PC-9 (cell line): ENCODE measurements at regions of chr6 and their contacts with region 1.

Region 1: GRCh38 chr6:108558372-108559096 is 2.2 kb upstream of the FOXO3 start:
- DNase-seq: peak; percentile 95 to 96
- H3K4me3 ChIP-seq: peak overlapping the region; percentile 99
- H3K27ac ChIP-seq: peak overlapping the region; percentile 83
- H3K4me1 ChIP-seq: peaks cover 12% of the 10 kb centered on the region
- H3K27me3 ChIP-seq: no peaks in the 10 kb centered on the region
- CTCF ChIP-seq: no peak

Region 2: GRCh38 chr6:108407904-108408827 is 150.4 kb before region 1 on chr6:
- CTCF ChIA-PET with region 1: no interaction called
- POLR2A ChIA-PET with region 1: no interaction called
- intact Hi-C with region 1: no loop called
- DNase-seq: no peak
- H3K4me3 ChIP-seq: no peak overlapping the region
- H3K27ac ChIP-seq: no peak overlapping the region
- H3K4me1 ChIP-seq: no peaks in the 10 kb centered on the region
- H3K27me3 ChIP-seq: no peaks in the 10 kb centered on the region
- CTCF ChIP-seq: no peak

Region 3: DNA sequence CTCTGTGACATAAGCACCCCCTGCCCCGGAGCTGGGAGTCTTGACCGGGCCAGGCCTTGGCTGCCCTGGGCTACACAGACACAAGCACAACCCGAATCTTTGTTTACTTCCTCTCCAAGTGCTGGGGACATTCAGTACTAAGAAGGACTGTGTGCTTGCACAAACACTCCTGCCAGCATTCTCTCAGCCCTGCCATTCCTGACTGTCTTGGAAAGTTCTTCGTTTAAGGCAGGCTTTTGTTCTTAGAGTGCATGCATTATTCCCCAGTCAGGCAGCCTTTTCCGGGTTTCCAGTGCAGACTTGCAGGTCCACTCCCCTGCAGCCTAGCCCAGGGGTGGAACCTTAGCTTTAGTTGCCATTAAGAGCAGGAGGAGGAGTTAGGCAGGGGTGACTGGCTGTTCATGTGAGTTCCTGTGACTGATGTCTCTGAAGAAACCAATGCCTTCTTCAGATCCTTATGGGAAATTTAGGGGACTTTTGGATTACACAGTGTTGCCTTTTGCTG is 30.8 kb after region 1 on chr6:
- CTCF ChIA-PET with region 1: interaction called, 3 read pairs
- POLR2A ChIA-PET with region 1: interaction called, 5 read pairs
- intact Hi-C with region 1: loop called (anchors 2 kb)
- DNase-seq: peak; percentile 78 to 90
- H3K4me3 ChIP-seq: no peak overlapping the region
- H3K27ac ChIP-seq: peak overlapping the region; percentile 45
- H3K4me1 ChIP-seq: peaks cover 75% of the 10 kb centered on the region
- H3K27me3 ChIP-seq: no peaks in the 10 kb centered on the region
- CTCF ChIP-seq: no peak

Region 4: DNA sequence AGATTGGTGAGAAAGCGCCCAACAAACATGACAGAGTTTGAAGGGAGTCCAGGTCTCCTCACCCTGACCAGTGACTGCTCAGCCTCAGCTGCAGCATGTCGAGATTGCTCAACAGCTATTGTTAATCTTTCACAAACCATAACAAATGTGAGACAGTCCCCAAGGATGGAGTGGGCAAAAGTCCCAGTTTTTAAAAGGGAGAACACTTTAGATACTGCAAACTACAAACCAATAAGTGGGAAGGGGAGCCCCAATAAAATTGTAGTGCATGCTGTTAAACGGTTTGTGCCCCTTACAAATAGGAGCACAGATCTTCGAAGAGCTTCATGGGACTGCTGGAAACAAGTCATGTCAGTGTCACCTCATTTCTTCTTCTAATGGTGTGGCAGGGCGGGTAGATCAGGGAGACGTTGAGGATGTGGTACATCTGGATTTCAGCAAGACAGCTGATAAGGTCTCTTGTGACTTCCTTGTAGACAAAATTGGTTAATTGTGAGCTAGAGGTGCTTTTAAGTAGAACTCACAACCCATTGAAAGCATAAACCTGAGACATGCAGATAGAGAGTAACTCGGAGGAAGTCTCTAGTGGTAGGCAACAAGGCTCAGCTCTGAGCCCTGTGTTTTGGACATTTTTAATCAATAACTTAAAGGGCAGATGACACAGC is 155.7 kb after region 1 on chr6:
- CTCF ChIA-PET with region 1: no interaction called
- POLR2A ChIA-PET with region 1: interaction called, 14 read pairs
- intact Hi-C with region 1: no loop called
- DNase-seq: peak in 1 of 2 experiments; percentile 35
- H3K4me3 ChIP-seq: no peak overlapping the region
- H3K27ac ChIP-seq: no peak overlapping the region
- H3K4me1 ChIP-seq: peaks cover 35% of the 10 kb centered on the region
- H3K27me3 ChIP-seq: no peaks in the 10 kb centered on the region
- CTCF ChIP-seq: no peak

Region 5: DNA sequence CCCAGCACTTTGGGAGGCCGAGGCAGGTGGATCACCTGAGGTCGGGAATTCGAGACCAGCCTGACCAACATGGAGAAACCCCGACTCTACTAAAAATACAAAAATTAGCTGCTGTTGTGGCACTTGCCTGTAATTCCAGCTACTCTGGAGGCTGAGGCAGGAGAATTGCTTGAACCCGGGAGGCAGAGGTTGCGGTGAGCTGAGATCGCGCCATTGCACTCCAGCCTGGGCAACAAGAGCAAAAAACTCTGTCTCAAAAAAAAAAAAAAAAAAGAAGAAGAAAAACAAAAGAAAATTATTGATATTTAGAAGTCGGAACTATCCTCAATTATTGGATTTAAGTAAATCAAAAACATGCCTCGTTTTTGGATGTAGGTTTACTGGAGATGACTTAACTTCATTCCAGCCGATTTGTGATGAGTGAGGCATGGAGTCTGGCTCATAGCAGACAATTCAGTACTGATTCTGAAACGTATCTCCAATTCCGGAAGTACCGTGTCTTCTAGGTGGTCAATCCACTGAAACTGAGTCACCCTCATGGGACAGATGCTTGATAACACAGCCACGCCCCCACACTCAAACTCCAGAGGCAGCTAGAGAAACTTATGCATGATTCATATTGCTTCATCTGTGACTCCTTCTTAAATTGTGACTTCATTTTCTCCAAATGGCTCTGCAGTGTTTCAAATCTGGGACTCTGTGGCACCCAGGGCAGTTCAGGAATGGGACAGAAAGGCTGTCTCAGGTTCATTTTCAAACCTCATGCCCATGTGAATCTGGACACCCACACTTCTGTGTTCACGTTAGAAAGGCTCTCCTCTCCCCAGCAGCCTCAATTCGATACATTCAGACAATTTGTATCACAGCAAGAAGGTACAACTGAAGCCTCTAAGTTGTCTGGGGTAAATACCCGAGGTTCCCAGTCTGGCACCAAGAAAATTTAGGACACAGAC is 179.3 kb after region 1 on chr6:
- CTCF ChIA-PET with region 1: no interaction called
- POLR2A ChIA-PET with region 1: interaction called, 9 read pairs
- intact Hi-C with region 1: loop called (anchors 1 kb)
- DNase-seq: peak; percentile 84 to 99
- H3K4me3 ChIP-seq: peak overlapping the region; percentile 59
- H3K27ac ChIP-seq: peak overlapping the region; percentile 99
- H3K4me1 ChIP-seq: peaks cover 93% of the 10 kb centered on the region
- H3K27me3 ChIP-seq: no peaks in the 10 kb centered on the region
- CTCF ChIP-seq: no peak

Region 6: GRCh38 chr6:108782179-108783041 is 223.9 kb after region 1 on chr6:
- CTCF ChIA-PET with region 1: no interaction called
- POLR2A ChIA-PET with region 1: interaction called, 6 read pairs
- intact Hi-C with region 1: loop called (anchors 1 kb)
- DNase-seq: peak; percentile 89 to 91
- H3K4me3 ChIP-seq: peak overlapping the region; percentile 43
- H3K27ac ChIP-seq: peak overlapping the region; percentile 77
- H3K4me1 ChIP-seq: peaks cover 45% of the 10 kb centered on the region
- H3K27me3 ChIP-seq: no peaks in the 10 kb centered on the region
- CTCF ChIP-seq: peak; percentile 91

Region 7: GRCh38 chr6:109187399-109188114 is 629.0 kb after region 1 on chr6:
- CTCF ChIA-PET with region 1: no interaction called
- POLR2A ChIA-PET with region 1: no interaction called
- intact Hi-C with region 1: loop called (anchors 5 kb)
- DNase-seq: peak; percentile 52 to 60
- H3K4me3 ChIP-seq: no peak overlapping the region
- H3K27ac ChIP-seq: no peak overlapping the region
- H3K4me1 ChIP-seq: no peaks in the 10 kb centered on the region
- H3K27me3 ChIP-seq: no peaks in the 10 kb centered on the region
- CTCF ChIP-seq: peak; percentile 98